ENCODE measurements at regions of chr14 and their contacts with region 1.

Region 1: GRCh38 chr14:65302571-65303189 is 109.8 kb upstream of the FUT8 start:
- DNase-seq: no peak
- H3K4me3 ChIP-seq: no peak overlapping the region
- H3K27ac ChIP-seq: no peak overlapping the region
- H3K4me1 ChIP-seq: no peaks in the 10 kb centered on the region
- H3K27me3 ChIP-seq: no peaks in the 10 kb centered on the region
- CTCF ChIP-seq: no peak

Region 2: DNA sequence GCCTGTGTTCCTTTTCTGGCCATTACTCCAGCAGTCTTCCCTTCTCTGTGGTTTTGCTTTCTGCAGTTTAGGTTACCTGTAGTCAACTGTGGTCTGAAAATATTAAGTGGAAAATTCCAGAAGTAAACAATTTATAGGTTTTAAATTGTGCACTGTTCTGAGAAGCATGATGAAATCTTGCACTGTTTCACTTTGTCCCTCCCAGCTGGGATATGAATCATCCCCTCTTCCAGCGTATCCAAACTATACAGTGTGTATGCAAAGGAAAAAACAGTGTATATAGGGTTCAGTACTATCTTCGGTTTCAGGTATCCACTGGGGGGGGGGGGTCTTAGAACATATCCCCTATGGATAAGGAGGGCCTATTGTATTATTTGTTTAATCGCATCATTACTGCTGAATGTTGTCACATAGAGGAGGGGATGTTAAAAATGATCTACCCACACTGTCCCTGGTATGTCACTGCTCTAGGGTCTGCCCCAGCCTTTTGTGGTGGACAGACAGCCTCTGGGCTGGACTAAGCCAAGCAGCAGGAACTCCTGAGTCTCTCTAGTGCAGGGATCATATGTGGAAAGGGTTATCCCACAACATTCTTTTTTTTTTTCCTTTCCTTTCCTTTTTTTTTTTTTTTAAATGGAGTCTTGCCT is 91.2 kb before region 1 on chr14:
- CTCF ChIA-PET with region 1: no interaction called
- dilution Hi-C with region 1: no loop called
- in situ Hi-C with region 1: no loop called
- intact Hi-C with region 1: no loop called
- DNase-seq: peak; percentile 78
- H3K4me3 ChIP-seq: peak overlapping the region in 1 of 3 experiments; percentile 19
- H3K27ac ChIP-seq: peak overlapping the region; percentile 70
- H3K4me1 ChIP-seq: peaks cover 24% of the 10 kb centered on the region
- H3K27me3 ChIP-seq: no peaks in the 10 kb centered on the region
- CTCF ChIP-seq: no peak

Region 3: GRCh38 chr14:65336191-65336591 is 33.5 kb after region 1 on chr14:
- CTCF ChIA-PET with region 1: interaction called, 34 read pairs
- dilution Hi-C with region 1: no loop called
- in situ Hi-C with region 1: no loop called
- intact Hi-C with region 1: no loop called
- DNase-seq: no peak
- H3K4me3 ChIP-seq: no peak overlapping the region
- H3K27ac ChIP-seq: no peak overlapping the region
- H3K4me1 ChIP-seq: peaks cover 8% of the 10 kb centered on the region
- H3K27me3 ChIP-seq: no peaks in the 10 kb centered on the region
- CTCF ChIP-seq: no peak